ENCODE measurements at regions of chr3 and their contacts with region 1.

Region 1: GRCh38 chr3:167734498-167735232 is at the start of gene PDCD10:
- DNase-seq: peak; percentile 86 to 99 (median 98)
- ATAC-seq: peak; percentile 93
- H3K4me3 ChIP-seq: peak within 1 kb of the TSS; percentile 90
- H3K4me3 Mint-ChIP-seq: no peak within 1 kb of the TSS
- H3K27ac ChIP-seq: peak within 1 kb of the TSS; percentile 78
- H3K27ac Mint-ChIP-seq: no peak within 1 kb of the TSS
- H3K4me1 ChIP-seq: peaks cover 20 to 24% of the 10 kb centered on the region in 2 donors
- H3K4me1 Mint-ChIP-seq: peaks cover 11 to 29% (median 22%) of the 10 kb centered on the region in 7 donors
- H3K27me3 ChIP-seq: no peaks in the 10 kb centered on the region
- H3K27me3 Mint-ChIP-seq: no peaks in the 10 kb centered on the region
- total RNA-seq, gene PDCD10: 31.5 to 69.8 (median 45.0) TPM

Region 2: GRCh38 chr3:167380004-167380689 is 354.5 kb before region 1 on chr3 and contains the start of gene ZBBX:
- CTCF ChIA-PET with region 1: interaction called, 9 read pairs
- POLR2A ChIA-PET with region 1: no interaction called
- intact Hi-C with region 1: loop called (anchors 1 kb)
- DNase-seq: peak; percentile 75 to 87 (median 83)
- ATAC-seq: peak; percentile 95
- H3K4me3 ChIP-seq: peak within 1 kb of the TSS; percentile 49
- H3K4me3 Mint-ChIP-seq: peak within 1 kb of the TSS; percentile 71 to 91 (median 85)
- H3K27ac ChIP-seq: no peak within 1 kb of the TSS
- H3K27ac Mint-ChIP-seq: peak within 1 kb of the TSS; percentile 58 to 92 (median 77)
- H3K4me1 ChIP-seq: peaks cover 0 to 3% of the 10 kb centered on the region in 2 donors
- H3K4me1 Mint-ChIP-seq: peaks cover 5 to 14% (median 7%) of the 10 kb centered on the region in 7 donors
- H3K27me3 ChIP-seq: no peaks in the 10 kb centered on the region
- H3K27me3 Mint-ChIP-seq: peaks cover 0 to 15% (median 6%) of the 10 kb centered on the region in 5 donors
- total RNA-seq, gene ZBBX: not detected

Region 3: DNA sequence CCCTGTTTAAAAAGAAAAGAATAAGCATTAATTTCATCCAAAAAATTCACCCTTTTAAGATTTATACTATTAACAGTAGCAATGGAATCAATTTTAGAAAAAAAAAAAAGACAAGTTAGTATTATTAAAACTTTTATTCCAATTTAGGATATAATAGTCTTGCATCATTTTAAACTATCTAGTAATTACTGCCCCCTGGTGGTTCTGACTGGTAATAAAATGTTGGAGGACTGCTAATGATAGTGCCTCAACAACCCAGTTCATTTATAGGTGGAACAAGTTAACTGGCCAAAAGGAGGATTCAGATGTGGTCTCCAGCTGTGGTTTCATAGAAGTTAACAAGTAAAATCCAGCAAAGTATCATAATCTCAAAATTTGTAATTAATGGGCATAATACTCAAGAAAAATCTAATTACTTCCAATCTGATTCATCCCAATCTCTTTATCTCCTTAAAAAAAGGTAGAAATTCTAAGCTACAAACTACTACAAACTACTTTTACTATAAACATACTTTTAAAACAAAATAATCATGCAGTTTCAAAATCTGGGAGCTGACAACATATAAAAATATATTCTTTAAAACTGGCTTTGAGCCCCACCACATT is 50.2 kb before region 1 on chr3:
- CTCF ChIA-PET with region 1: no interaction called
- POLR2A ChIA-PET with region 1: no interaction called
- intact Hi-C with region 1: loop called in 1 of 2 experiments (anchors 2 kb)
- DNase-seq: peak in 8 of 9 donors; percentile 25 to 64 (median 52)
- ATAC-seq: peak; percentile 85
- H3K4me3 ChIP-seq: no peak overlapping the region
- H3K4me3 Mint-ChIP-seq: no peak overlapping the region
- H3K27ac ChIP-seq: no peak overlapping the region
- H3K27ac Mint-ChIP-seq: no peak overlapping the region
- H3K4me1 ChIP-seq: no peaks in the 10 kb centered on the region
- H3K4me1 Mint-ChIP-seq: peaks cover 0 to 3% (median 0%) of the 10 kb centered on the region in 7 donors
- H3K27me3 ChIP-seq: no peaks in the 10 kb centered on the region
- H3K27me3 Mint-ChIP-seq: no peaks in the 10 kb centered on the region

Region 4: GRCh38 chr3:167691366-167691765 is 43.3 kb before region 1 on chr3:
- CTCF ChIA-PET with region 1: no interaction called
- POLR2A ChIA-PET with region 1: no interaction called
- intact Hi-C with region 1: loop called (anchors 1 to 5 kb)
- DNase-seq: peak in 7 of 9 donors; percentile 2 to 27 (median 23)
- ATAC-seq: peak; percentile 78
- H3K4me3 ChIP-seq: no peak overlapping the region
- H3K4me3 Mint-ChIP-seq: peak overlapping the region in 3 of 10 donors; percentile 4 to 33 (median 30)
- H3K27ac ChIP-seq: peak overlapping the region; percentile 50
- H3K27ac Mint-ChIP-seq: peak overlapping the region; percentile 49 to 86 (median 77)
- H3K4me1 ChIP-seq: peaks cover 9 to 14% of the 10 kb centered on the region in 2 donors
- H3K4me1 Mint-ChIP-seq: peaks cover 14 to 40% (median 28%) of the 10 kb centered on the region in 7 donors
- H3K27me3 ChIP-seq: no peaks in the 10 kb centered on the region
- H3K27me3 Mint-ChIP-seq: no peaks in the 10 kb centered on the region

Region 5: DNA sequence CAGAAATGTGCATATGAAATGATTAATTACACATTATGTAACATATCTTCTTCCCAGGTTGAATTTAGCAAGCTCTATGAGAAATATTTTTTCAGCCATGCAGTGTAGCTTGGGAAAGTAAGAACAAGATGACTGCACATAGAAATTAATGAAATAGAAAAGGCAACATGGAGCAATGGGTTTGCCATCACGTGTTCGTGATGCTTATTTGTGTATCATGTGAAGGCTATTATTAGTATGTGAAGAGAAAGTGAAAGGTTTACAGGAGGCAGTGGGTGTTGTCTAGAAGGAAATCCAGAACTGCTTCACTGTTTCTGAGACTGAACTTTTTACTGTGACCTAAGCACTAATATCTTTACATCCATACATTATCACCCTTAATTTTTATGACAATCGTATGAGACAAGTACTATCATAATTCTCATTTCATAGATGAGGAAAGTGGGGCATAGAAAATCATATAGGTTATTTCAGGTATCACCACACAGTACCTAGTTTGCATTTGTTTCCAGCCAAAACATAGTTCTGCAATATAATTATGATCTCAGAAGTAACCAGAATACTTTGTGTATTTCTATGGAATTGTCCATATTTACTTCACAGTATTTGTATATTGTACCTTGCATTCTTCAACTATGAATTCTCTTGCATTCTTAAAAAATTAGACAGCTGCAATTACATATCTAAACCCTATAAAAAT is 15.8 kb after region 1 on chr3:
- CTCF ChIA-PET with region 1: no interaction called
- POLR2A ChIA-PET with region 1: interaction called, 3 read pairs
- intact Hi-C with region 1: loop called in 1 of 2 experiments (anchors 1 kb)
- DNase-seq: peak in 4 of 9 donors; percentile 1 to 18 (median 8)
- ATAC-seq: peak; percentile 85
- H3K4me3 ChIP-seq: no peak overlapping the region
- H3K4me3 Mint-ChIP-seq: peak overlapping the region in 3 of 10 donors; percentile 22 to 71 (median 69)
- H3K27ac ChIP-seq: no peak overlapping the region
- H3K27ac Mint-ChIP-seq: peak overlapping the region in 5 of 9 donors; percentile 7 to 69 (median 39)
- H3K4me1 ChIP-seq: no peaks in the 10 kb centered on the region
- H3K4me1 Mint-ChIP-seq: peaks cover 7 to 16% (median 10%) of the 10 kb centered on the region in 7 donors
- H3K27me3 ChIP-seq: no peaks in the 10 kb centered on the region
- H3K27me3 Mint-ChIP-seq: no peaks in the 10 kb centered on the region

Region 6: GRCh38 chr3:167773584-167773983 is 38.9 kb after region 1 on chr3:
- CTCF ChIA-PET with region 1: no interaction called
- POLR2A ChIA-PET with region 1: no interaction called
- intact Hi-C with region 1: no loop called
- DNase-seq: no peak
- ATAC-seq: no peak
- H3K4me3 ChIP-seq: no peak overlapping the region
- H3K4me3 Mint-ChIP-seq: no peak overlapping the region
- H3K27ac ChIP-seq: no peak overlapping the region
- H3K27ac Mint-ChIP-seq: no peak overlapping the region
- H3K4me1 ChIP-seq: no peaks in the 10 kb centered on the region
- H3K4me1 Mint-ChIP-seq: peaks cover 0 to 9% (median 3%) of the 10 kb centered on the region in 7 donors
- H3K27me3 ChIP-seq: no peaks in the 10 kb centered on the region
- H3K27me3 Mint-ChIP-seq: no peaks in the 10 kb centered on the region

Region 7: DNA sequence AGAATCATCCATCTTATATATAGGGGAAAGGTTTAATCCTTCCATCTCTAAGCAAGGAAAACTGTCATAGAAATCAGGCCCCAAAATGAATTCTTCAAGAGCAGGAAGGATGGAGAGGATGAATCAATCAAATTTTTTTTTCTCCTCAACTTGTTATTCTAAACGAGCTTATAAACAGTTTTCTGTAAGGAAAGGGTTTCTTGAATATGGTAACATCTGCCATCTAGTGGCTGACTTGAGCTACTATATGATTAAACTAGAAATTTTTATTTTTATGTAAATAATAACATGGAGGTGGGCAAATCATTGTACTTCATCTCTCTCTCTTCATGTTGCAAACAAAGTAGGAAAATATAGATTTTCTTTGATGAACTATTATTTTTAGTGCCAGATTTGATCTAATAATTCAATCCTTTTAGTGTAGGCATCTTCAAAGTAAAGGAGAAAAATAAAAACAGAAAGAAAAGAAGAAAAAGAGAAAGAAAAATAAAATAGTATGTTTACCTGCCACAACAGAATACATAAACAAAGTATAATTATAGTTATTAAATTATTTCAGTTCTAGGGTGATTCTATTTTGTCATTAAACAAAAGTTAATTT is 147.5 kb after region 1 on chr3:
- CTCF ChIA-PET with region 1: no interaction called
- POLR2A ChIA-PET with region 1: no interaction called
- intact Hi-C with region 1: loop called in 1 of 2 experiments (anchors 5 kb)
- DNase-seq: peak in 6 of 9 donors; percentile 1 to 45 (median 30)
- ATAC-seq: peak; percentile 61
- H3K4me3 ChIP-seq: no peak overlapping the region
- H3K4me3 Mint-ChIP-seq: peak overlapping the region in 3 of 10 donors; percentile 22 to 41 (median 27)
- H3K27ac ChIP-seq: no peak overlapping the region
- H3K27ac Mint-ChIP-seq: no peak overlapping the region
- H3K4me1 ChIP-seq: no peaks in the 10 kb centered on the region
- H3K4me1 Mint-ChIP-seq: peaks cover 0 to 5% (median 2%) of the 10 kb centered on the region in 7 donors
- H3K27me3 ChIP-seq: no peaks in the 10 kb centered on the region
- H3K27me3 Mint-ChIP-seq: peaks cover 9 to 29% (median 17%) of the 10 kb centered on the region in 5 donors

Region 8: DNA sequence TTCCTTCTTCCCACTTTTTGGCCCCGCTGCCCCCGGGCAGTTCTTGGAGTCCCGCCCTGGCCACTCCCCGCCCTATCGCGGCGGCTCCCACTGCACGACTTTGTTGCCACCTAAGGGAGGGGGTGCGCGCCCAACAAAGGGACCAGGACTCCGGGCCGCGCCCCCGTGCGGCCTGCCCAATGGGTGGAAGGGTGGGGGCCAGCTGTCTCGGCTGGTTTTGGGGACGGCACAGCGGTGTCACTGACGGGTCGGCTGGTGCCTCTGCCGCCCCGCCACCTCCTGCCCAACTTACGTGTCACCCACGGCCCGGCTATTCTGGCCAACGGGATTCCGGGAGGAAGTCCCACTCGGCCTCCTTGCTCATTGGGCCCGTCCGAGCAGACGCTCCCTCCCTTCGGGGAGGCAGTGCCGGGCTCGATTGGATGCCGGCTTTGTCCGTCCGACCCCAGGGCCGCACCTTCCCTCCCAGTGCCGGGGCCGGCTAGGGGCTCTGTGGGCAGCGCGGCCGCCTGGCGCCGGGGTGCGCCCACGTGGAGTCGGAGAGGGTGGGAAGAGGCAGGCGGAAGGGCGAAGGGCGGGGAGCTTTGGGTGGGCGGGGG is 361.0 kb after region 1 on chr3 and contains the start of gene GOLIM4:
- CTCF ChIA-PET with region 1: no interaction called
- POLR2A ChIA-PET with region 1: no interaction called
- intact Hi-C with region 1: loop called in 1 of 2 experiments (anchors 10 kb)
- DNase-seq: peak in 4 of 9 donors; percentile 2 to 77 (median 22)
- ATAC-seq: peak; percentile 86
- H3K4me3 ChIP-seq: peak within 1 kb of the TSS; percentile 37
- H3K4me3 Mint-ChIP-seq: peak within 1 kb of the TSS; percentile 72 to 96 (median 86)
- H3K27ac ChIP-seq: peak within 1 kb of the TSS; percentile 14
- H3K27ac Mint-ChIP-seq: peak within 1 kb of the TSS in 2 of 9 donors; percentile 51 to 83
- H3K4me1 ChIP-seq: no peaks in the 10 kb centered on the region
- H3K4me1 Mint-ChIP-seq: peaks cover 4 to 15% (median 12%) of the 10 kb centered on the region in 7 donors
- H3K27me3 ChIP-seq: no peaks in the 10 kb centered on the region
- H3K27me3 Mint-ChIP-seq: peaks cover 47 to 60% (median 51%) of the 10 kb centered on the region in 5 donors
- total RNA-seq, gene GOLIM4: 0.43 to 5.5 (median 1.0) TPM